ENCODE measurements at regions of chr3 and their contacts with region 1.

Region 1: DNA sequence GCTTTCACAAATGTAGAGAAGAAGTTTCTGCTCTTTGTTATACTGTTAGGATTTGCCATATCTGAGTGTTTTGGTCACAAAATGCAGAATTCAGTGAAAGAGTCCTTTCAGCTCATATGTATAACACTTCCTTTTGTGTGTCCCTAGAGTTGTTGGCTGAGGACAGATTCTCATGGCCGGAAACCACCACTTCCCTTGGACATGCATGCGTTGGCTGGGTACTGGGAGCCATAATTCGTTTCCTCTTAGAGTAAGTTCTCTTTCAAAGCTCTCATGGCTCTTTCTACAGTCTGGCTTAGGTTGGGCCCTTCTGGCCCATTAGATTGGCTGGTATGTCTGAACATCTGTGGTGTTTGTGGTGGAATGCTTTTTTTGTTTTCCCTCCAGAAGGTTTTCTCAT is 298.5 kb downstream of the DIPK2A start:
- DNase-seq: no peak
- ATAC-seq: no peak
- H3K4me3 ChIP-seq: no peak overlapping the region
- H3K4me3 Mint-ChIP-seq: no peak overlapping the region
- H3K27ac ChIP-seq: no peak overlapping the region
- H3K27ac Mint-ChIP-seq: no peak overlapping the region
- H3K4me1 ChIP-seq: no peaks in the 10 kb centered on the region
- H3K4me1 Mint-ChIP-seq: peaks cover 0 to 3% (median 2%) of the 10 kb centered on the region in 3 donors
- H3K27me3 ChIP-seq: no peaks in the 10 kb centered on the region
- H3K27me3 Mint-ChIP-seq: peaks cover 3 to 11% of the 10 kb centered on the region in 2 donors

Region 2: GRCh38 chr3:143464850-143465249 is 805.2 kb before region 1 on chr3:
- CTCF ChIA-PET with region 1: no interaction called
- POLR2A ChIA-PET with region 1: no interaction called
- DNase-seq: no peak
- ATAC-seq: no peak
- H3K4me3 ChIP-seq: no peak overlapping the region
- H3K4me3 Mint-ChIP-seq: no peak overlapping the region
- H3K27ac ChIP-seq: no peak overlapping the region
- H3K27ac Mint-ChIP-seq: no peak overlapping the region
- H3K4me1 ChIP-seq: no peaks in the 10 kb centered on the region
- H3K4me1 Mint-ChIP-seq: no peaks in the 10 kb centered on the region
- H3K27me3 ChIP-seq: no peaks in the 10 kb centered on the region
- H3K27me3 Mint-ChIP-seq: no peaks in the 10 kb centered on the region

Region 3: GRCh38 chr3:143885780-143886427 is 384.2 kb before region 1 on chr3:
- CTCF ChIA-PET with region 1: interaction called in 1 of 2 experiments, 10 read pairs
- POLR2A ChIA-PET with region 1: no interaction called
- DNase-seq: peak in 17 of 35 experiments; percentile 1 to 56 (median 5)
- ATAC-seq: peak in 3 of 4 experiments; percentile 57 to 84 (median 62)
- H3K4me3 ChIP-seq: no peak overlapping the region
- H3K4me3 Mint-ChIP-seq: no peak overlapping the region
- H3K27ac ChIP-seq: no peak overlapping the region
- H3K27ac Mint-ChIP-seq: no peak overlapping the region
- H3K4me1 ChIP-seq: no peaks in the 10 kb centered on the region
- H3K4me1 Mint-ChIP-seq: no peaks in the 10 kb centered on the region
- H3K27me3 ChIP-seq: peaks cover 0 to 7% of the 10 kb centered on the region in 2 experiments
- H3K27me3 Mint-ChIP-seq: peaks cover 4 to 8% of the 10 kb centered on the region in 2 donors

Region 4: DNA sequence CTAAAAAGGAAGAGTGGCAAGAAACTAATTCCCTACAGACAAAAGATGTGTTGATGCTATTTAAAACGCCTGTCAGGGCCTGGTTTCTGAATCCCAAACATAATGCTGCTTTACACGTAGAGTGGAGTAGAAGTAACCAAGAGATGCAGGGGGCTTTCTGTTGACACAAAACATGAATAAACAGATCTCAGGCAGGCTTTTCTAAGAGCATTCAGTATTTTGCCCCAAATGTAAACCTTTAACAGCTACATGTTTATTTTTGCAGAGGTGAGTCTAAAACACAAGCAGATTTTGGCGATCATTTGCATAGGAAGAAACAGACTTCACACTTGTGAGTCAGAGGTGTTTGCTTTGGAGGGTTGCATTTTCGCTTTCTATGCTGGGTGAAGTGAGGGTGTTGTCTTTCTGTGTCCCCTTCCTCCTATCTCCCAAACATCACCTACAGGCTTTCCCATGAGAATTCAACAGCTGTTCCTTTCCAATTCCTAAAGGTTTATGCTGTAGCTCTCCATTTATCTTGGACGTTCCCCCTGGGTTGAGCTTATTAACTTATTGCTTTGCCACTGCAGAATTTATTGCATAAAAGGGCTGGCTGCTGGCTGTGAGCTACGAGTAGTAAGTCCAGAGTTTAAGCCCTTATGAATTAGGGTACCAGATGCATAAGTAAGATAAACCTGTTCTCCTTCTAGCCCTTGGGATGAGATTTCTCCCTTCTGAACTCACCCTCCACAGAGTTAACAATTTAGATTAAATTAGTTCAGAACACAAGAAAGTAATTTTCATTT is 141.8 kb before region 1 on chr3:
- CTCF ChIA-PET with region 1: no interaction called
- POLR2A ChIA-PET with region 1: no interaction called
- DNase-seq: peak in 1 of 35 experiments; percentile 37
- ATAC-seq: no peak
- H3K4me3 ChIP-seq: no peak overlapping the region
- H3K4me3 Mint-ChIP-seq: no peak overlapping the region
- H3K27ac ChIP-seq: peak overlapping the region; percentile 46
- H3K27ac Mint-ChIP-seq: no peak overlapping the region
- H3K4me1 ChIP-seq: no peaks in the 10 kb centered on the region
- H3K4me1 Mint-ChIP-seq: no peaks in the 10 kb centered on the region
- H3K27me3 ChIP-seq: no peaks in the 10 kb centered on the region
- H3K27me3 Mint-ChIP-seq: peaks cover 2 to 7% of the 10 kb centered on the region in 2 donors